Activated naive CD4-positive, alpha-beta T cell treated with anti-CD3 and anti-CD28 coated beads for 36 hours (primary cell): ENCODE measurements at regions of chr10 and their contacts with region 1.

Region 1: GRCh38 chr10:124403548-124403947 is 15.2 kb downstream of the OAT start:
- DNase-seq: peak; percentile 33
- H3K4me3 Mint-ChIP-seq: no peak overlapping the region
- H3K27ac Mint-ChIP-seq: no peak overlapping the region
- H3K4me1 Mint-ChIP-seq: peaks cover 5% of the 10 kb centered on the region
- H3K27me3 Mint-ChIP-seq: no peaks in the 10 kb centered on the region

Region 2: DNA sequence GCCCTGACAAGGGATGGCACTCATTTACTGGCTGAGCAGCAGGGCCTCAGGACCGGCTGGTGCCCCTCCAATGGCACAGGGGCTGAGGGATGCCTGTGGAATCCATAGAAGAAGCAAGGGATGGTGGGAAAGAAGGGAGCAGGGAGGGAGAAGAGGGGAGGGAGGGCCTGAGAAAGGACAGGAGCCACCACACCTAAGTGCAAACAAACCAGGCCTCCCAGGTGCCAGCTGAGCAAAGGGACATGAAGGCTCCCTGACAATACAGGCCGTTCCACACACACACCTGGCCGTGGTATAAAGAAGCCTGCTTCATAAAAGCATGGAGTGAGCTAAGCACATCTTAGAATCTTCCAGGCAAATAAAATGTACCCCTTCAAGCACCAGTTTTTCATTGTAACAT is 38.9 kb before region 1 on chr10:
- CTCF ChIA-PET with region 1: no interaction called
- intact Hi-C with region 1: no loop called
- DNase-seq: no peak
- H3K4me3 Mint-ChIP-seq: no peak overlapping the region
- H3K27ac Mint-ChIP-seq: no peak overlapping the region
- H3K4me1 Mint-ChIP-seq: no peaks in the 10 kb centered on the region
- H3K27me3 Mint-ChIP-seq: peaks cover 2% of the 10 kb centered on the region

Region 3: GRCh38 chr10:124418726-124419501 is 15.4 kb after region 1 on chr10 and contains the start of gene OAT:
- CTCF ChIA-PET with region 1: interaction called, 29 read pairs
- intact Hi-C with region 1: no loop called
- DNase-seq: peak; percentile 98
- H3K4me3 Mint-ChIP-seq: peak within 1 kb of the TSS; percentile 76
- H3K27ac Mint-ChIP-seq: no peak within 1 kb of the TSS
- H3K4me1 Mint-ChIP-seq: peaks cover 25% of the 10 kb centered on the region
- H3K27me3 Mint-ChIP-seq: no peaks in the 10 kb centered on the region
- total RNA-seq, gene OAT: 37.4 to 41.6 TPM